Activated naive CD4-positive, alpha-beta T cell treated with anti-CD3 and anti-CD28 coated beads for 36 hours (primary cell): ENCODE measurements at regions of chr11 and their contacts with region 1.

Region 1: GRCh38 chr11:36509694-36510566 is at the start of gene TRAF6:
- DNase-seq: peak; percentile 91
- H3K4me3 Mint-ChIP-seq: peak within 1 kb of the TSS; percentile 97
- H3K27ac Mint-ChIP-seq: peak within 1 kb of the TSS; percentile 90
- H3K4me1 Mint-ChIP-seq: peaks cover 30% of the 10 kb centered on the region
- H3K27me3 Mint-ChIP-seq: no peaks in the 10 kb centered on the region
- total RNA-seq, gene TRAF6: 8.3 to 8.7 TPM

Region 2: GRCh38 chr11:35943713-35944655 is 565.9 kb before region 1 on chr11 and contains the start of gene LDLRAD3:
- CTCF ChIA-PET with region 1: no interaction called
- intact Hi-C with region 1: loop called (anchors 10 kb)
- DNase-seq: peak; percentile 31
- H3K4me3 Mint-ChIP-seq: peak within 1 kb of the TSS; percentile 74
- H3K27ac Mint-ChIP-seq: no peak within 1 kb of the TSS
- H3K4me1 Mint-ChIP-seq: peaks cover 9% of the 10 kb centered on the region
- H3K27me3 Mint-ChIP-seq: peaks cover 41% of the 10 kb centered on the region
- total RNA-seq, gene LDLRAD3: 0.17 to 0.22 TPM

Region 3: GRCh38 chr11:36550385-36551115 is 40.6 kb after region 1 on chr11:
- CTCF ChIA-PET with region 1: no interaction called
- intact Hi-C with region 1: no loop called
- DNase-seq: no peak
- H3K4me3 Mint-ChIP-seq: no peak overlapping the region
- H3K27ac Mint-ChIP-seq: no peak overlapping the region
- H3K4me1 Mint-ChIP-seq: no peaks in the 10 kb centered on the region
- H3K27me3 Mint-ChIP-seq: peaks cover 12% of the 10 kb centered on the region

Region 4: GRCh38 chr11:36622431-36623136 is 112.7 kb after region 1 on chr11:
- CTCF ChIA-PET with region 1: no interaction called
- intact Hi-C with region 1: loop called (anchors 2 kb)
- DNase-seq: peak; percentile 20
- H3K4me3 Mint-ChIP-seq: no peak overlapping the region
- H3K27ac Mint-ChIP-seq: no peak overlapping the region
- H3K4me1 Mint-ChIP-seq: peaks cover 3% of the 10 kb centered on the region
- H3K27me3 Mint-ChIP-seq: peaks cover 5% of the 10 kb centered on the region

Region 5: DNA sequence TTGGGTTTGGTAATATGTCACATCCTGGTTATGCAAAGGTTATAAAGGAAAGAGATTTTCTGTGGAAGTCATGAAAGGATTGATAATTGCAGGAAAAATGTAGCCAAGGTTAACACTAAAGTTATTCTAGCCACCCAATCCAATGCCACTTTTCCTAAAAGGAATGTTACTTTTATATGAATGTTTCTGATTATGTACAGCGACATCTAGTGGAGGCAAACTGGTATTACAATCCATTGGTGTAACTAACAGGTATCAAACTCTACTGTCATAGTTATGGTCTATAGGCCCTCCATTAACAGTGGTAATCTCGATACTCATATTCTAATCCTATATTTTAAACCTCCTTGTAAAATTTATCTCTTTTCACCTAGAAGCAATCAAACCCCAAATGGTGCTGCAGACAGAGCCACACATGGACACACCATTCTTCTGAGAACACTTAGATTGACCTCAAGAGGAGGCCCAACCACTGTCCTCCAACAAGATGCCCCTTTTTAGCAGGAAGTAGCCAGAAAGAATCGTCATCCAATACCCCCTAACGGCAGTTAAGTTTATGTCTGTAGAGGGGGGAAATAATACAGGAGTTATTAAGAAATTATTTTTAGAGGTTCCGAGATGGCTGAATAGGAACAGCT is 163.0 kb after region 1 on chr11:
- CTCF ChIA-PET with region 1: interaction called, 3 read pairs
- intact Hi-C with region 1: loop called (anchors 1 kb)
- DNase-seq: peak; percentile 14
- H3K4me3 Mint-ChIP-seq: no peak overlapping the region
- H3K27ac Mint-ChIP-seq: no peak overlapping the region
- H3K4me1 Mint-ChIP-seq: no peaks in the 10 kb centered on the region
- H3K27me3 Mint-ChIP-seq: peaks cover 21% of the 10 kb centered on the region